H1 (cell line): ENCODE measurements at regions of chr6 and their contacts with region 1.

Region 1: GRCh38 chr6:7238900-7239589 is 74.0 kb downstream of the SSR1 start:
- DNase-seq: peak in 1 of 2 experiments; percentile 90
- H3K4me3 ChIP-seq: no peak overlapping the region
- H3K27ac ChIP-seq: no peak overlapping the region
- H3K4me1 ChIP-seq: peaks cover 9 to 23% (median 14%) of the 10 kb centered on the region in 4 experiments
- H3K27me3 ChIP-seq: no peaks in the 10 kb centered on the region
- CTCF ChIP-seq: peak; percentile 69 to 79 (median 79)
- EP300 ChIP-seq: no peak
- POLR2A ChIP-seq: no peak
- RAD21 ChIP-seq: peak; percentile 68 to 80

Region 2: GRCh38 chr6:6696867-6697531 is 542.0 kb before region 1 on chr6:
- CTCF ChIA-PET with region 1: interaction called, 33 read pairs
- POLR2A ChIA-PET with region 1: no interaction called
- DNase-seq: peak; percentile 43 to 88
- H3K4me3 ChIP-seq: no peak overlapping the region
- H3K27ac ChIP-seq: no peak overlapping the region
- H3K4me1 ChIP-seq: peaks cover 19 to 28% (median 20%) of the 10 kb centered on the region in 4 experiments
- H3K27me3 ChIP-seq: no peaks in the 10 kb centered on the region; a peak in 1 of 7 replicates
- CTCF ChIP-seq: peak; percentile 85 to 88 (median 86)
- EP300 ChIP-seq: no peak
- POLR2A ChIP-seq: no peak
- RAD21 ChIP-seq: peak; percentile 85 to 92

Region 3: DNA sequence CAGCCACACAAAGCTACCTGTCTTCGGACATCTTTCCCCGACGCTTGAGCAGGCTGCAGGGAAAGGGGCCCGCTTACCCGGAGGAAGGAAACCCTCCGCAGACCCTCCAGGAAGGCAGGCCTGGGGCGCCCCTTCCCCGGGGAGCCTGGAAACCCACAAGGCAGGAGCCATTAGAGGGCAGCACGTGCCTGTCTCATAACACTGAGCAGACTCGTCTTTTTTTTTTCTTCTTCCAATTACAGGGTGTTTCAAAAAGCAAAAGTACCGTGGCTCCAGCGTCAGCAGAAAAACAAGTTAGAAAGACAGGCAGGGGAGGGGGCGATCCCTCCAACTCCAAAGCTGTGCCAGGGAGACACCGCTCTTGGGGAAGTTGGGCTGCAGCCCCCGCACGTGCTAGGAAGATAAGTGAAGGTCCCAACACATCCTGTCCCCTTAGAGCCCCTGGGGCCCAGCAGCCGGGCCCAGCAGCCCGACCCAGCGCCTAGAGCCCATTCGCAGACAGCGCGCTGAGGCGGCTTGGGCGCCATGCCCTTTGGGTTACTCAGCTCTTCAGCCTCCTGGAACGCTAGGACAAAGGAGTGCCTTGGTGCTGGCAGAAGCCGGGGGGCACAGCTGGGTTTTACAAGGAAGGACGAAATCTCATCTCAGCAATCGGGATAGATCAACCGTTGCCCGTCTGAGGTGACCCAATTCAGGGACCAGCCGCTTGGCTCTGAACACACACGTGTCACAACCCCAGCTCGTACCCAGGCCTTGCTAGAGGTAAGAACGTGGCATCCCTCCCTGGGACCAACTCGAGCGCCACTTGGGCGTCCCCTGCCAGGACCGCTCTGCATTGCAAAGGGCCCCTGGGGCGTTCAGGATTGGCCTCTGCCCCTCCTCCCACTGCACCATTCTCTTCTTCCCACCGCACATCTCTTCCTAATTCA is 514.2 kb before region 1 on chr6:
- CTCF ChIA-PET with region 1: interaction called, 28 read pairs
- POLR2A ChIA-PET with region 1: interaction called, 3 read pairs
- DNase-seq: peak; percentile 66 to 83
- H3K4me3 ChIP-seq: peak overlapping the region in 3 of 4 experiments; percentile 10 to 51 (median 27); a peak in 5 of 8 replicates
- H3K27ac ChIP-seq: peak overlapping the region; percentile 5; the same call in 1 of the 2 replicates
- H3K4me1 ChIP-seq: peaks cover 12 to 25% (median 20%) of the 10 kb centered on the region in 4 experiments
- H3K27me3 ChIP-seq: peaks cover 0 to 11% (median 2%) of the 10 kb centered on the region in 4 experiments; a peak in 2 of 7 replicates
- CTCF ChIP-seq: peak; percentile 53 to 62 (median 54); a peak in 3 of 4 replicates
- EP300 ChIP-seq: peak in 1 of 2 experiments; percentile 64; a peak in 1 of 3 replicates
- POLR2A ChIP-seq: peak in 1 of 2 experiments; percentile 67; a peak in 2 of 3 replicates
- RAD21 ChIP-seq: peak; percentile 82 to 85

Region 4: GRCh38 chr6:7154341-7155139 is 84.5 kb before region 1 on chr6:
- CTCF ChIA-PET with region 1: interaction called, 10 read pairs
- POLR2A ChIA-PET with region 1: no interaction called
- DNase-seq: peak in 1 of 2 experiments; percentile 35
- H3K4me3 ChIP-seq: no peak overlapping the region
- H3K27ac ChIP-seq: no peak overlapping the region
- H3K4me1 ChIP-seq: peaks cover 4 to 19% (median 11%) of the 10 kb centered on the region in 4 experiments; a peak in 6 of 7 replicates
- H3K27me3 ChIP-seq: no peaks in the 10 kb centered on the region
- CTCF ChIP-seq: no peak
- EP300 ChIP-seq: no peak
- POLR2A ChIP-seq: no peak
- RAD21 ChIP-seq: no peak

Region 5: GRCh38 chr6:7224731-7225130 is 14.3 kb before region 1 on chr6:
- CTCF ChIA-PET with region 1: interaction called, 20 read pairs
- POLR2A ChIA-PET with region 1: interaction called, 3 read pairs
- DNase-seq: no peak
- H3K4me3 ChIP-seq: no peak overlapping the region
- H3K27ac ChIP-seq: no peak overlapping the region
- H3K4me1 ChIP-seq: peaks cover 6 to 10% (median 9%) of the 10 kb centered on the region in 4 experiments; a peak in 6 of 7 replicates
- H3K27me3 ChIP-seq: no peaks in the 10 kb centered on the region
- CTCF ChIP-seq: no peak
- EP300 ChIP-seq: no peak
- POLR2A ChIP-seq: no peak
- RAD21 ChIP-seq: no peak

Region 6: GRCh38 chr6:7249946-7250643 is 11.1 kb after region 1 on chr6:
- CTCF ChIA-PET with region 1: interaction called, 55 read pairs
- POLR2A ChIA-PET with region 1: no interaction called
- DNase-seq: no peak
- H3K4me3 ChIP-seq: no peak overlapping the region
- H3K27ac ChIP-seq: no peak overlapping the region
- H3K4me1 ChIP-seq: no peaks in the 10 kb centered on the region; a peak in 1 of 7 replicates
- H3K27me3 ChIP-seq: no peaks in the 10 kb centered on the region
- CTCF ChIP-seq: peak in 2 of 3 experiments; percentile 11 to 24; a peak in 2 of 4 replicates
- EP300 ChIP-seq: no peak
- POLR2A ChIP-seq: no peak
- RAD21 ChIP-seq: no peak

Region 7: GRCh38 chr6:7254980-7255835 is 16.2 kb after region 1 on chr6:
- CTCF ChIA-PET with region 1: interaction called, 55 read pairs
- POLR2A ChIA-PET with region 1: no interaction called
- DNase-seq: no peak
- H3K4me3 ChIP-seq: no peak overlapping the region
- H3K27ac ChIP-seq: no peak overlapping the region
- H3K4me1 ChIP-seq: peaks cover 0 to under 1% (median under 1%) of the 10 kb centered on the region in 4 experiments; a peak in 6 of 7 replicates
- H3K27me3 ChIP-seq: no peaks in the 10 kb centered on the region
- CTCF ChIP-seq: peak in 1 of 3 experiments; percentile 5; a peak in 1 of 4 replicates
- EP300 ChIP-seq: no peak
- POLR2A ChIP-seq: no peak
- RAD21 ChIP-seq: peak; percentile 13 to 20; a peak in 2 of 4 replicates

Region 8: GRCh38 chr6:7332090-7332745 is 93.2 kb after region 1 on chr6:
- CTCF ChIA-PET with region 1: no interaction called
- POLR2A ChIA-PET with region 1: no interaction called
- DNase-seq: no peak
- H3K4me3 ChIP-seq: no peak overlapping the region
- H3K27ac ChIP-seq: no peak overlapping the region
- H3K4me1 ChIP-seq: no peaks in the 10 kb centered on the region
- H3K27me3 ChIP-seq: no peaks in the 10 kb centered on the region
- CTCF ChIP-seq: no peak
- EP300 ChIP-seq: no peak
- POLR2A ChIP-seq: no peak
- RAD21 ChIP-seq: no peak